ENCODE measurements at regions of chr18 and their contacts with region 1.

Region 1: DNA sequence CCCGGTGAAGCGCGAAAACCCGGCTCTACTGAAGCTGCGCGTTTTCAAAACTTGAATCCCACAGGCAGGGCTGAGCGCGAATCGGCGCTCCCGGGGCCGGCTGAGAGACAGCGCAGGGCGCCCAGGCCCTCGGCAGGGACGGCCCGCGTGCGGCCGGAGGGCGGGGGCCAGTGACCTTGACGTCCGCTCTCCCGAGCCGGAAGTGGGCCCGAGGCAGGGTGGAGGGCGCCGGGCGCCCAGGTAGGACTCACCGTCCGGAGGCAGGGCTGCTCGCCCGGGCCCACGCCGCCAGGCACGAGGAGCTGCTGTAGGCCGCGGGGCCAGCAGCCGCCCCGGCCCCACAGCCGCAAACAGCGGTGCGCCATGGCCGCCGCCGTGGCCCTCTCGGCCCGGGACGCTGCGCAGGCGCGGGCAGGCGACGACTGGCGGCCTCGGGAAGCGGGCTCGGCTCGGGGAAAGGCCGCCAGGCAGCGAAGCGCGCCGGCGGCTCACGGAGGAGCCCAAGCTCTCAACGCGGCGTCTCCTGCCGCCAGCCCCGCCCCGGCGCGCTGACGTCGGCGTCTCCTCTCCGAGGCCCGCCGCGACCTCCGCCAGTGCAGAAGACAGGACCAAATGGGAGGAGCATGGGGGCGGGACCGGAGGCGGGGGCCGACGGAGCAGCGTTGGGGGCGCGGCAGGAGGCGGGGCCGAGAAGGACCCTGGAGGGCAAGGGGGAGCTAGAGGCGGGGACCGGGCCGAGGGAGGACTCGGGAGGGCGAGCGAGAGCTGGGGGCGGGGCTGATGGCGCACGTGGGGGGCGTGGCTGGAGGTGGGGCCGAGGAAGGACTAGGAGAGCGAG is at the start of gene AFG3L2:
- DNase-seq: peak; percentile 100
- ATAC-seq: peak; percentile 91 to 96 (median 94)
- H3K4me3 ChIP-seq: peak within 1 kb of the TSS; percentile 76 to 94 (median 84)
- H3K27ac ChIP-seq: peak within 1 kb of the TSS; percentile 97 to 100 (median 100)
- H3K4me1 ChIP-seq: peaks cover 4 to 56% (median 32%) of the 10 kb centered on the region in 9 donors
- H3K27me3 ChIP-seq: no peaks in the 10 kb centered on the region
- CTCF ChIP-seq: no peak
- total RNA-seq, gene AFG3L2: 126 to 176 (median 145) TPM

Region 2: GRCh38 chr18:12308386-12309100 is 68.4 kb before region 1 on chr18:
- intact Hi-C with region 1: loop called in 2 of 10 experiments (anchors 1 to 10 kb)
- DNase-seq: peak; percentile 83 to 85
- ATAC-seq: peak; percentile 75 to 88 (median 83)
- H3K4me3 ChIP-seq: peak overlapping the region; percentile 63 to 95 (median 82)
- H3K27ac ChIP-seq: peak overlapping the region; percentile 94 to 100 (median 99)
- H3K4me1 ChIP-seq: peaks cover 6 to 50% (median 35%) of the 10 kb centered on the region in 9 donors
- H3K27me3 ChIP-seq: peaks cover 0 to 29% (median 0%) of the 10 kb centered on the region in 7 donors
- CTCF ChIP-seq: no peak

Region 3: DNA sequence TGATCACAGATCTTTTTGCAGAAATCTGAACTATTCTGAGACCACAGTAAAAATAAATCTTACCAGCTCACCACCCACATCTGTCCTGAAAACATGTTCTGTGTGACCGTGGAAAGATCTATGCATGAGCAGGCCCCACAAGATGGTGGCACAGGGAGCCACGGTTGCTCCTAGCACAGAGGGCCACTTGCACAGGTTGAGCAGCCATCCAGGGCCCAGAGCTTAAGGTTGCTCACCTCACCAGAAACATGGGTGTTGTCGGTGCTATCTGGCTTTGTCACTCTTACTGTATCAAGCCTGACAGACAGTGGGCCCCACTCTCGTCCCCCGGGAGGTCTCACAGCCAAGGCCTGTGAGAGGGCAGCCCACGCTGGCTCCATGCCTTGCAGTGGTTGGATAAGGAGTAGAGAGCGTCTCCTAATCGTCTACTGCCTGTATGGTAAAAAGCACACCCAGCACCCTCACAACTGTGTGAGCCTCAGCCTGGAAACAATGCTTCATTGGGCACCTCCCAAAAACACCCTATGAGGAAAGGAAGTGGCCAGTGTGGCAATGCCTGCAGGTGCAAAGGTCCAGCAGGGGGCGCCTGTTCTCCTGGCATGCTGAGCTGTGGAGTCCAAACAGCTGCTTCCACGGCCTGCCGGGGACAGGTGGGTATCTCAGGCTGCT is 49.3 kb before region 1 on chr18:
- intact Hi-C with region 1: loop called in 2 of 10 experiments (anchors 5 kb)
- DNase-seq: peak; percentile 85 to 86
- ATAC-seq: peak; percentile 39 to 86 (median 80)
- H3K4me3 ChIP-seq: no peak overlapping the region
- H3K27ac ChIP-seq: peak overlapping the region in 7 of 10 donors; percentile 42 to 73 (median 49)
- H3K4me1 ChIP-seq: peaks cover 2 to 38% (median 29%) of the 10 kb centered on the region in 9 donors
- H3K27me3 ChIP-seq: no peaks in the 10 kb centered on the region
- CTCF ChIP-seq: peak; percentile 60 to 91 (median 76)

Region 4: GRCh38 chr18:12934454-12935071 is 557.6 kb after region 1 on chr18:
- intact Hi-C with region 1: loop called in 2 of 10 experiments (anchors 10 kb)
- DNase-seq: peak; percentile 81 to 84
- ATAC-seq: peak; percentile 74 to 96 (median 92)
- H3K4me3 ChIP-seq: no peak overlapping the region
- H3K27ac ChIP-seq: no peak overlapping the region
- H3K4me1 ChIP-seq: peaks cover 0 to 8% (median 0%) of the 10 kb centered on the region in 9 donors
- H3K27me3 ChIP-seq: no peaks in the 10 kb centered on the region
- CTCF ChIP-seq: peak; percentile 71 to 95 (median 93)

Measured in heart right ventricle (tissue), 16 donors.